Colonic mucosa (tissue), 4 donors: ENCODE measurements at regions of chr2 and their contacts with region 1.

Region 1: DNA sequence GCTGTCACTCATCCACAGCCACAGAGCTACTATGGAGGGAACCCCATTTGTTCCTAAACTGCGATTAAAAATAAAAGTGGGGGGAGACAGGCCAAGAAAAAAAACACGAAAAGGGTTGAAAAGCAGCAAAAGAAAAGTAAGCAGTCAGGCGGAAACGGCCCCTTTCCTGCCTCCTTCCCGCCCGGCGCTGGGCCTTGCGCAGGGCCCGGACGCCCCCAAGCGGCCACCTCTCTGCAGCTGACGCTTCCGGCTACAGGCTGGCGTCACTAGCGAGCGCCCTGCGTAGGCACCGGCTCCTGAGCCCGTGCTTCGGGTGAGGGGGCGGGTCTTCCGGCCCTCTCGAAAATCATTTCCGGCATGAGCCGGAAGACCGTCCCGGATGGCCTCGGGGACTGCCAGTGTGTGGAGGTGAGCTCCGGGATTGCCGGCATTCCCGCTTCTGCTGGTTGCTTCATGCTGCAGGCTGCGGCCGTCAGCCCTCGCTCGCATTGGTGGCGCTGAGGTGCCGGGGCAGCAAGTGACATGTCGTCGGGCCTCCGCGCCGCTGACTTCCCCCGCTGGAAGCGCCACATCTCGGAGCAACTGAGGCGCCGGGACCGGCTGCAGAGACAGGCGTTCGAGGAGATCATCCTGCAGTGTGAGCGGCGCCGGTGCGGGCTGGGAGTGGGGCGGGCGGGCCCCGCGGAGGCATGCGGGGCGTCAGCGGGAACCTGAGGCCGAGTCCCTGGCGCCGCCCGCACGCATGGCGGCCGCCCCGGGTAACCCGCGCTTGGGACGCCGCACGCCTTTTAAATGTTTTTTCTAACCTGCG is at the start of gene ATG16L1:
- DNase-seq: peak; percentile 96
- H3K4me3 ChIP-seq: peak within 1 kb of the TSS; percentile 88
- H3K27ac ChIP-seq: peak within 1 kb of the TSS; percentile 82
- H3K4me1 ChIP-seq: peaks cover 16% of the 10 kb centered on the region
- H3K27me3 ChIP-seq: no peaks in the 10 kb centered on the region
- CTCF ChIP-seq: peak; percentile 92
- total RNA-seq, gene ATG16L1: 32.1 to 36.3 TPM

Region 2: GRCh38 chr2:232611551-232612218 is 639.8 kb before region 1 on chr2:
- intact Hi-C with region 1: loop called (anchors 10 kb)
- DNase-seq: peak; percentile 70
- H3K4me3 ChIP-seq: no peak overlapping the region
- H3K27ac ChIP-seq: no peak overlapping the region
- H3K4me1 ChIP-seq: no peaks in the 10 kb centered on the region
- H3K27me3 ChIP-seq: no peaks in the 10 kb centered on the region
- CTCF ChIP-seq: peak; percentile 86

Region 3: GRCh38 chr2:232846055-232846454 is 405.5 kb before region 1 on chr2:
- intact Hi-C with region 1: loop called (anchors 5 kb)
- DNase-seq: no peak
- H3K4me3 ChIP-seq: no peak overlapping the region
- H3K27ac ChIP-seq: no peak overlapping the region
- H3K4me1 ChIP-seq: no peaks in the 10 kb centered on the region
- H3K27me3 ChIP-seq: no peaks in the 10 kb centered on the region
- CTCF ChIP-seq: no peak

Region 4: DNA sequence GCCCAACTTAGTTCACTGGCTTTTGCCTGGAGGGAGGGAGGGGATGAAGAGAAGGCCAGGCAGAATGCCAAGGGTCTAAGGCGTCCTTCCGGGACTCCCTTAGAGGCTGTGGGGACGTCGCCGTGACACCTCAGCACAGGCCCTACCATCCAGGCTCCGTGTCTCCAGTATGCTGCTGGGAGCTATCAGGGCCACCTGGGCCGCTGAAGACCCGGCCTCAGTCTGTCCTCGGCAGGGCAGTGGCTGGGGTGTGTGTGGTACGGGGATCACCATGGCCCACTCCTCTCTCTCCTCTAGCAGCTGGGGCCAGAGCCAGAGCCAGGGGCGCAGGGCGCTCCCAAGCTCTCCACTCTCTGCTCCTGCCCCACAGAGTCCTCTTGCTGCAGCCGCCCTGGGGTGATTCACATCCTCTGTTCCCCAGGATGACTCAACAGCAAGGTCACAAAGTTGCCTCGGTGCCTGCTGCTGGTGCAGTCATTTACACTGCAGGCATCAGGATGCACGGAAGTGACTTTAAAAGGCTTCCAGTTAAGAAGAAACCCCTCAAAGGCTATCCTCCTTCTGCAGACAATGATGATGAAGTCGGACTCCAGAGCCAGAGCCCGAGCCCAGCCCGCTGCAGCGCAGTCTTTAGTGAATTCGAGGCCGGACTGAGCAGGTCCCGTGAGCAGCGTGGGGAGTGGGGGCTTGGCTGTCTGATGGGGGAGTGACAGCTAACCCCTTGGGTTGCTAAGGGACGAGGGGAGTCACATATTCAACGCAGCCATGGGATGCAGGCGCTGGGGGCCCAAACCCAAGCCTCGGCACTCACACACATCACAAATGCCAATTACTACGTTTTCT is 349.6 kb before region 1 on chr2:
- intact Hi-C with region 1: no loop called
- DNase-seq: no peak
- H3K4me3 ChIP-seq: no peak overlapping the region
- H3K27ac ChIP-seq: no peak overlapping the region
- H3K4me1 ChIP-seq: no peaks in the 10 kb centered on the region
- H3K27me3 ChIP-seq: no peaks in the 10 kb centered on the region
- CTCF ChIP-seq: no peak

Region 5: DNA sequence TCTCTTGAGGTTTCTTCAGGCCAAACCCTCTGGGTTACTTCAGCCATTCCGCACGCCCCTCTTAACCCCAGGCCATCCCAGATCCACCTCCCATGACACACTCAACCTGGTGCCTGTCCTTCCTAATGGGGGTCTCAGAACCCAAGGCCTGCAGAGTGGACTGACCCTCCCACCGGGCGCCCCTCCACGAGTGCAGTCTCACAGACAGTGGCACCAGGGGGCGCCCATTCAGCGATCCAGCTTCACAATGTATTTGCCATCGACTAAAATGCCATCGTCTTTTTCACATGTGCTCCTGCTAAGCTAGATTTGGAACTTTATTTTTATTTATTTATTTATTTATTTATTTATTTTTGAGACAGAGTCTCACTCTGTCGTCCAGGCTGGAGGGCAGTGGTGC is 152.9 kb before region 1 on chr2:
- intact Hi-C with region 1: loop called (anchors 2 kb)
- DNase-seq: no peak
- H3K4me3 ChIP-seq: no peak overlapping the region
- H3K27ac ChIP-seq: no peak overlapping the region
- H3K4me1 ChIP-seq: no peaks in the 10 kb centered on the region
- H3K27me3 ChIP-seq: no peaks in the 10 kb centered on the region
- CTCF ChIP-seq: no peak

Region 6: GRCh38 chr2:233280114-233280693 is 28.7 kb after region 1 on chr2:
- intact Hi-C with region 1: no loop called
- DNase-seq: no peak
- H3K4me3 ChIP-seq: no peak overlapping the region
- H3K27ac ChIP-seq: no peak overlapping the region
- H3K4me1 ChIP-seq: no peaks in the 10 kb centered on the region
- H3K27me3 ChIP-seq: no peaks in the 10 kb centered on the region
- CTCF ChIP-seq: no peak

Region 7: GRCh38 chr2:233480490-233481202 is 229.1 kb after region 1 on chr2:
- intact Hi-C with region 1: no loop called
- DNase-seq: no peak
- H3K4me3 ChIP-seq: no peak overlapping the region
- H3K27ac ChIP-seq: no peak overlapping the region
- H3K4me1 ChIP-seq: no peaks in the 10 kb centered on the region
- H3K27me3 ChIP-seq: no peaks in the 10 kb centered on the region
- CTCF ChIP-seq: no peak